Aorta (tissue), 5 donors: ENCODE measurements at regions of chr16 and their contacts with region 1.

Region 1: GRCh38 chr16:10911267-10911666 is 31.0 kb downstream of the DEXI start:
- DNase-seq: no peak
- ATAC-seq: no peak
- H3K4me3 ChIP-seq: no peak overlapping the region
- H3K27ac ChIP-seq: no peak overlapping the region
- H3K4me1 ChIP-seq: no peaks in the 10 kb centered on the region
- H3K27me3 ChIP-seq: no peaks in the 10 kb centered on the region

Region 2: DNA sequence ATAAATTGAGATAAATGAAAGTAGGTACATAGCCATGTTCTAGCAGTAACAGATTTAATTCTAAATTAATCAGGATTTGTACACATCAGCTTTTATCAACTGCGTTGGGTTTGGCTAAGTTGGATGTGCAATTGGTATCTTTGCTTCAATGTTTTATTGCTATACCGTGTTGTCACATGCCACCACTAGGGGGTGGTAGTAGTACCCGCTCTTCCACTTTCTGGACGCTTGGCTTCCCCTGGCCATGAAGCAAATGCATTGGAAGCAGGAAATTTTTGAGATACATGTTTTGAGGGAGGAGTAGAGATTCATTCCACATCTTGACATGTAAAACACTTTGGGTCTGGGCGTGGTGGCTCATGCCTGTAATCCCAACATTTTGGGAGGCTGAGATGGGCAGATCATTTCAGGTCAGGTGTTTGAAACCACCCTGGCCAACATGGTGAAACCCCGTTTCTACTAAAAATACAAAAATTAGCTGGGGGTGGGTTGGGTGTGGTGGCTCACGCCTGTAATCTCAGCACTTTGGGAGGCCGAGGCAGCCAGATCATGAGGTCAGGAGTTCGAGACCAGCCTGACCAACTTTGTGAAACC is 389.5 kb before region 1 on chr16:
- intact Hi-C with region 1: loop called in 1 of 2 experiments (anchors 5 kb)
- DNase-seq: peak in 1 of 2 donors; percentile 74
- ATAC-seq: peak; percentile 85
- H3K4me3 ChIP-seq: no peak overlapping the region
- H3K27ac ChIP-seq: no peak overlapping the region
- H3K4me1 ChIP-seq: no peaks in the 10 kb centered on the region
- H3K27me3 ChIP-seq: no peaks in the 10 kb centered on the region

Region 3: DNA sequence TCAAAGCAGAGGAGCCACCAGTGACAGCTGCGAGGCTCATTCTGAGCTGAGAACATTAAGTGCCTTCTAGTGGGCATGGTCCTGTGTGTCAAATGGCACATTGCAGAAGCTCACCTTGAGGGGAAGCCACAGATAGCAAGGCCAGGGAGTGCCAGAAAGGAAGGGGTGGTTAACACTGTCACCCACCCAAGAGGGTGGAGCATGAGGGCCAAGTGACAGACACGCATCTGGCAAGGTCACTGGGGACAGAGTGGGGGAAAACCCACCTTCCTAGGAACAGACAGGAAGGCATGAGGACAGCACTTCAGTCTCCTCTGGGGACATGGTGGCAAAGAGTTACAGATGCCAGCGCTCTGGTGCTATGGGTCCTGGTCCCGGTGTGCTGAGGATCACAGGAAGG is 145.5 kb before region 1 on chr16:
- intact Hi-C with region 1: no loop called
- DNase-seq: no peak
- ATAC-seq: no peak
- H3K4me3 ChIP-seq: no peak overlapping the region
- H3K27ac ChIP-seq: no peak overlapping the region
- H3K4me1 ChIP-seq: no peaks in the 10 kb centered on the region
- H3K27me3 ChIP-seq: no peaks in the 10 kb centered on the region

Region 4: GRCh38 chr16:10865991-10866966 is 45.0 kb before region 1 on chr16:
- intact Hi-C with region 1: loop called in 1 of 2 experiments (anchors 2 kb)
- DNase-seq: no peak
- ATAC-seq: no peak
- H3K4me3 ChIP-seq: no peak overlapping the region
- H3K27ac ChIP-seq: no peak overlapping the region
- H3K4me1 ChIP-seq: no peaks in the 10 kb centered on the region
- H3K27me3 ChIP-seq: no peaks in the 10 kb centered on the region